Ovary (tissue), 10 donors: ENCODE measurements at regions of chr6 and their contacts with region 1.

Region 1: DNA sequence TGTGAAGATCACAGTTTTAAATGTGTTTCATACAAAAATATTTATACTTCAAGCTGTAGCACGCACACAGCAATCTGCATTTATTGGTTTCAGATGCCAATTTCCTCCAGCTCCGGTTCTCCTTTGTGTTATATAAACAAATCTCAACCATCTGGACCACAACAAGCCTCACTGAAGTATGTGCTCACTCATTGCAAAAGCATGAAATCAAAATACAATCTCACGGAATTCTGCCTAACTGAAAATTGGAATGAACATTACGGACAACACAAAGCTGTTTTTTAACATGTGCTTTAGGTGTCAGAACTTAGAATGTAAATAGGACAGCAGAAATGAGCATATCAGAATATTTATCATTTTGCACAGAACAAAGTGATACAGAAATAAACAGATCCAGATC is 38.0 kb downstream of the RCAN2 start:
- DNase-seq: no peak
- H3K4me3 ChIP-seq: no peak overlapping the region
- H3K27ac ChIP-seq: no peak overlapping the region
- H3K4me1 ChIP-seq: peaks cover 1% of the 10 kb centered on the region
- H3K27me3 ChIP-seq: no peaks in the 10 kb centered on the region
- CTCF ChIP-seq: no peak
- EP300 ChIP-seq: no peak
- POLR2A ChIP-seq: no peak

Region 2: GRCh38 chr6:46501136-46502089 is 48.2 kb after region 1 on chr6:
- intact Hi-C with region 1: loop called in 1 of 4 experiments (anchors 10 kb)
- DNase-seq: no peak
- H3K4me3 ChIP-seq: no peak overlapping the region
- H3K27ac ChIP-seq: no peak overlapping the region
- H3K4me1 ChIP-seq: peaks cover 7% of the 10 kb centered on the region
- H3K27me3 ChIP-seq: no peaks in the 10 kb centered on the region
- CTCF ChIP-seq: no peak
- EP300 ChIP-seq: no peak
- POLR2A ChIP-seq: no peak

Region 3: DNA sequence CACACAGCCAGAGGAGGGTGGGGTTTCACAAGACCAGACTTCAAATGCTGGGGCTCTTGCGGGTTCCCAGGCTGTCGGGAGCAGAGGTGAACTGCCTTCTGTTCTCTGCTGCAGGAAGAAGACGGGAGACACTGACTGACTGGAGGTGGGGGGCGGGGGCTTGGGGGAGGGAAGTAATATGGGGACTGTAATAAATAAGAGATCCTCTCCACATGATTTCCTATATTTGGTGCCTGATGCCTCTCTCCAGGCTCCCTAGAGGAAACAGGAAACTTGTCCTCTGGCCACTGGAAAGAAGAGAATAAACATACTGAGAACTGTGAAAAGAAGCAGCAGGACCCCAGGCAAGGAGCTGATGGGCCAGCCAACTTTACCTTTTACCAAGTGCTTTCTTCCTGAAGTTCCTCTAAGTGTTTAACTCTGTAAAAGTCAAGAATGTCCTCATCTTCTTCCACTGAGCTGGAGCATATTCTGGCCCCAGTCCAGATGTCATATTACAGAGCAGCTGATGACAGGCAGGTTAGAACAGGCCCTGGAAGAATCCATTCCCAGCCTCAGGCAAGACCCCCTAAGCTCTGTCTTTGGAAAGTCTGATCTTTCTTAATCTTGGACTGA is 501.7 kb after region 1 on chr6:
- intact Hi-C with region 1: no loop called
- DNase-seq: no peak
- H3K4me3 ChIP-seq: no peak overlapping the region
- H3K27ac ChIP-seq: no peak overlapping the region
- H3K4me1 ChIP-seq: no peaks in the 10 kb centered on the region
- H3K27me3 ChIP-seq: no peaks in the 10 kb centered on the region
- CTCF ChIP-seq: no peak
- EP300 ChIP-seq: no peak
- POLR2A ChIP-seq: no peak